ENCODE measurements at regions of chr14 and their contacts with region 1.

Region 1: GRCh38 chr14:70821584-70822529 is 12.5 kb upstream of the MAP3K9 start:
- DNase-seq: peak; percentile 43
- H3K4me3 Mint-ChIP-seq: peak overlapping the region; percentile 84
- H3K27ac Mint-ChIP-seq: peak overlapping the region; percentile 68
- H3K4me1 Mint-ChIP-seq: peaks cover 29% of the 10 kb centered on the region
- H3K27me3 Mint-ChIP-seq: peaks cover 21% of the 10 kb centered on the region

Region 2: DNA sequence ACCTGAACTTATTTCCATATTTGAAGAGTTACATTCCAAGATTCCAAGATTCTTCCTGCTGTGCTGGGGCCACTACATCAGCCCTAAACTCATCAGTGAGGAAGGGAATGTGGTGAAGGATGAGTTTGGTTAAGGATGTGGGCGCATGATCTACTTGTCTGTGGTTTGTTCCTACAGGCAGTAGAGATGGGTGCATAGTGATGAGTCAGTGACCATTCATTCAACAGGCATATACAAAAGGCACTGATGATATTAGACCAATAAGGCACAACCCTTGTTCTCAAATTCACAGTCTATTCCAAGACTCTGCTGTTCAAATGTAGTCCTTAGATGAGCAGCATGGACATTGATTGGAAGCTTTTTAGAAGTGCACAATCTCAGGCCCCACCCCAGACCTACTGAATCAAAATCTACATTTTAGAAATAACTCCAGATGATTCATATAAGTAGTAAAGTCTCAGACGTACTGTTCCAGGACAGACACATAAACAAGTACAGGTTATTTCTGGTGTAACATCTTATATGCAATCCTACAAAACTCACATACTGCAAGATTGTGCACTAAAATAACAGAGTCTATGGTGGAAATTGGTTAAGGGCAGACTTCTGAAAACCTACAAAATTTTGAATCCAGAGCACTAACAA is 35.1 kb after region 1 on chr14:
- intact Hi-C with region 1: loop called (anchors 2 kb)
- DNase-seq: no peak
- H3K4me3 Mint-ChIP-seq: no peak overlapping the region
- H3K27ac Mint-ChIP-seq: no peak overlapping the region
- H3K4me1 Mint-ChIP-seq: peaks cover 10% of the 10 kb centered on the region
- H3K27me3 Mint-ChIP-seq: peaks cover 2% of the 10 kb centered on the region

Region 3: GRCh38 chr14:70972107-70972976 is 150.5 kb after region 1 on chr14:
- intact Hi-C with region 1: loop called (anchors 1 kb)
- DNase-seq: peak; percentile 67
- H3K4me3 Mint-ChIP-seq: no peak overlapping the region
- H3K27ac Mint-ChIP-seq: peak overlapping the region; percentile 19
- H3K4me1 Mint-ChIP-seq: peaks cover 21% of the 10 kb centered on the region
- H3K27me3 Mint-ChIP-seq: no peaks in the 10 kb centered on the region